ENCODE measurements at regions of chr7 and their contacts with region 1.

Region 1: GRCh38 chr7:51817694-51818225 is 501.2 kb upstream of the COBL start:
- DNase-seq: no peak
- ATAC-seq: no peak
- H3K4me3 ChIP-seq: no peak overlapping the region
- H3K27ac ChIP-seq: no peak overlapping the region
- H3K4me1 ChIP-seq: no peaks in the 10 kb centered on the region
- H3K27me3 ChIP-seq: no peaks in the 10 kb centered on the region
- CTCF ChIP-seq: no peak
- POLR2A ChIP-seq: no peak

Region 2: GRCh38 chr7:51774178-51774577 is 43.6 kb before region 1 on chr7:
- intact Hi-C with region 1: loop called in 1 of 10 experiments (anchors 5 kb)
- DNase-seq: no peak
- ATAC-seq: no peak
- H3K4me3 ChIP-seq: no peak overlapping the region
- H3K27ac ChIP-seq: no peak overlapping the region
- H3K4me1 ChIP-seq: no peaks in the 10 kb centered on the region
- H3K27me3 ChIP-seq: no peaks in the 10 kb centered on the region
- CTCF ChIP-seq: no peak
- POLR2A ChIP-seq: no peak